ENCODE measurements at regions of chr1 and their contacts with region 1.

Region 1: DNA sequence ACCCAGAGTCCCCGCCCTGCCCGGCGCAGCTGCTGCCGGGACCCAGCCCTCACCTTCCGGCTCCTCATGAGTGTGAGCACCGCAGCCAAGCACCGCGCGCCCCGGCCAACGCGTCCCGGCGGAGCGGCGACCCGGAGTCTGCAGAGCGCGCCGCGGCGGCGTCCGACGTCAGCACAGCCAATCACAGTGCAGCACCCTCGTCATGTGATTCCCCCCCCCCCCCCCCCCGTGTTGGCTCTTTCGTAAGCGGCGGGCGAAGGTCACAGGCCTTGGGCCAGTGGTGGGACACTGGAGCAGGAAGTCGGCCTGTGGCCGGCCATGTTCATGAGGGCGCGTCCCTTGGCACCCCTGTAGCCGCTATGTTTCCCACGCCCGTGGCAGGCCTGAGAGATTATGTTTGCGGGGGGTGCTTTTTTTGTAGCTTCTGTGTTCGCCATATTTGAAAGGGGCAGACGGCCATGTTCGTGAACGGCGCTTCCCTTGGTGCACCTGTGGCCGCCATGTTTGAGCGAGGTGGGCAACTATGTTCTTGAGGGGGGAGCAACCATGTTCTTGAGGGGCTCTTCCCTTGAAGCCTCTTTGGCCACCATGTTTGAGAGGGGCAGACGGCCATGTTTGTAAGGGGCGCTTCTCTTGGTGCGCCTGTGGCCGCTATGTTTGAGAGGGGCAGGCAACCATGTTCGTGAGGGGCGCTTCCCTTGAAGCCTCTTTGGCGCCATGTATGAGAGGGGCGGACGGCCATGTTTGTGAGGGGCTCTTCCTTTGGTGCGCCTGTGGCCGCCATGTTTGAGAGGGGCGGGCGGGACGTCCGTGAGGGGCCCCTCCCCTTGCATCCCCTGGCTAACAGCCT is at the start of gene C1orf174:
- DNase-seq: peak; percentile 94 to 98
- ATAC-seq: peak; percentile 90 to 95 (median 92)
- H3K4me3 ChIP-seq: peak within 1 kb of the TSS; percentile 76 to 100 (median 84)
- H3K27ac ChIP-seq: peak within 1 kb of the TSS; percentile 95 to 99 (median 98)
- H3K4me1 ChIP-seq: peaks cover 0 to 20% (median 9%) of the 10 kb centered on the region in 9 donors
- H3K27me3 ChIP-seq: no peaks in the 10 kb centered on the region
- CTCF ChIP-seq: no peak
- total RNA-seq, gene C1orf174: 7.5 to 13.4 (median 10.5) TPM

Region 2: DNA sequence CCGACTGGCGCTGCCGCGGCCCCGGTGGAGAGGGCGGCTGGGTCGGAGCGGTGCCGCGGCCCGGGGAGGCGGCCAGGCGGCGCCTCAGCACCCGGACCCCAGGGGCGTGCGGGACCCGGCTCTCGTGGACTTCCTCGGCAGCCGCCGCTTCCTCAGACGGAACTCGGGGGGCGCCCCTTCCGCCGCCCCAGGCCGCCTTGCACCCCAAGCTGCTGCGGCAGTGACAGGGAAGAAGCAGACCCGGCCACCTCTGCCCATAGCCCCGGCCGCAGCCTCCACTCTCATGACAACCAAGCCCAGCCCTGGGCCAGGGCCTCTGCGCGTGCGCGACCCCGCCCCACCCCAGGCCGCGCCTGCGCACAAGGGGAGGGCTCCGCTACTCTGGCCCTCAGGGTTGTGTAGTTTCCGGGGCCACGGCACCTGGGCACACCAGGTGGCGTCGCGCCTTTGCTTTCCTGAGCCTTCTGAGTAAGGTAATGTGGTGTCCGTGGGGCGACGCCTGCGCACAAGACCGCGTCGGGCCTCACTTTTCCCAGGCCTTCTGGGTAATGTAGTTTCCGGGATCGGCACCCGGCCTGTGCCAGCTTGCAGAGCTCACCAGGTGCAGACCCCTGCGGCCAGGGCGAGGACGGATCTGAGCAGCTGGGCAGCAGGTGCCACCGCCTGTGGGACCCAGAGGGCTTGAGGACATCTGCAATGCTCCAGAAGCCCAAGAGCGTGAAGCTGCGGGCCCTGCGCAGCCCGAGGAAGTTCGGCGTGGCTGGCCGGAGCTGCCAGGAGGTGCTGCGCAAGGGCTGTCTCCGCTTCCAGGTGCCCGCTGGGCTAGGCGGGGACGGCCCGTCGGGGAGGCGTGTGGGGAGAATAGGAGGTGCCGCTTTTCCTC is 43.2 kb before region 1 on chr1 and contains the starts of genes CEP104 and DFFB:
- intact Hi-C with region 1: loop called in 5 of 10 experiments (anchors 2 to 5 kb)
- DNase-seq: peak; percentile 83 to 89
- ATAC-seq: peak; percentile 96 to 98 (median 97)
- H3K4me3 ChIP-seq: peak within 1 kb of the TSS; percentile 63 to 95 (median 86)
- H3K27ac ChIP-seq: peak within 1 kb of the TSS in 9 of 10 donors; percentile 64 to 86 (median 78)
- H3K4me1 ChIP-seq: peaks cover 10 to 30% (median 24%) of the 10 kb centered on the region in 9 donors
- H3K27me3 ChIP-seq: no peaks in the 10 kb centered on the region
- CTCF ChIP-seq: peak in 4 of 9 donors; percentile 36 to 43 (median 40)
- total RNA-seq, gene CEP104: 20.6 to 42.9 (median 29.0) TPM
- total RNA-seq, gene DFFB: 1.2 to 4.1 (median 2.3) TPM

Region 3: GRCh38 chr1:4161366-4162006 is 261.1 kb after region 1 on chr1:
- intact Hi-C with region 1: no loop called
- DNase-seq: no peak
- ATAC-seq: no peak
- H3K4me3 ChIP-seq: no peak overlapping the region
- H3K27ac ChIP-seq: no peak overlapping the region
- H3K4me1 ChIP-seq: no peaks in the 10 kb centered on the region
- H3K27me3 ChIP-seq: peaks cover 0 to 51% (median 27%) of the 10 kb centered on the region in 7 donors
- CTCF ChIP-seq: no peak

Measured in heart right ventricle (tissue), 16 donors.